ENCODE measurements at regions of chr20 and their contacts with region 1.

Region 1: GRCh38 chr20:21099751-21100577 is 6.2 kb downstream of the LINC00237 start:
- DNase-seq: peak; percentile 64
- CTCF ChIP-seq: no peak

Region 2: DNA sequence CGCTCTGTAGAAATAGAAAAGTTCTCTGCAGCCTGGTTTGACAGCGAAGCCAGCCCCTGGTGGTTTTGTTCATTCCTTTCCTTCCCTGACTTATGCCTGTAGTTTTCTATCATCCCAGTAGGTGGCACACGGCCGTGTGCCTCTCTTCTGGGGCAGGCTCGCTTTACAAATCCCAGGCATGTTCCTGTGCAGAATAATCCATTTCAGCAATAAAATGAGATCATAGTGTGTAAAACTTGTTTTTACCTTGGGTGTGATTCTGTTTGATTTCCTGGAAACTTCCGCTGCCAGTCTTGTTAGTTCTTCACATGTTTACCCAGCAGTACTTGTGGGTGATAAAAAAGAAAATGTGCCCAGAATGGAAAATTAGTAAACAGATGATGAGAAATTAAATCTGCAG is 739.5 kb before region 1 on chr20:
- in situ Hi-C with region 1: loop called (anchors 25 kb)
- DNase-seq: peak; percentile 73
- CTCF ChIP-seq: peak; percentile 78

Region 3: GRCh38 chr20:21395666-21396598 is 296.0 kb after region 1 on chr20:
- in situ Hi-C with region 1: loop called (anchors 25 kb)
- DNase-seq: no peak
- CTCF ChIP-seq: no peak

Region 4: GRCh38 chr20:21505161-21505809 is 405.3 kb after region 1 on chr20:
- in situ Hi-C with region 1: loop called (anchors 25 kb)
- DNase-seq: peak; percentile 89
- CTCF ChIP-seq: peak; percentile 98

Region 5: DNA sequence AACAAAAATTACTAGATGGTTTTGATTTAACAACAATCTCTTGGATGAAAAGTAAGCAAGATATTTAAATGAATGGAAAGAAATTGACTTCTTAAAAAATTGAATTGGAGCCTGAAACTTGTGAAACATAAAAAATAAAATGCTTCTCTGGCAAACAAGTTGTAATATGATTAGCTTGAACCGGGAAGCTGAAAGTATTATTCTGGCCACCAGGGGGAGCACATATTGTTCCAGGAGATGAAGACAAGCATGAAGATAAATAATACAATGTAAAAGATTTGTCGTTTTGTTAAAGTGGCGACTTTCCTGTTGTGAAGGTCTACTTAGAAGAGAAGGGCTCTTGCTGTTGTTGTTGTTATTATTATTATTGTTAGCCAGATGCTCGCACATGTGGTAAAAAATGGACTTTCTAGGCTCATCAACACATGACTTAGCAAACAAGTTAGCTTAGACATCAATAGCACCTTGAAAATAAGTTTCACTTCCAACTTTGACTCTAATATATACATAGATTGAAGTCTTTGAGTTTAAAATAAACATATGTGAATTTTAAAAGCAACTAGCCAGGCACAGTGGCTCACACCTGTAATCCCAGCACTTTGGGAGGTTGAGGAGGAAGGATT is 619.7 kb after region 1 on chr20:
- in situ Hi-C with region 1: loop called (anchors 25 kb)
- DNase-seq: peak; percentile 72
- CTCF ChIP-seq: peak; percentile 78

Region 6: DNA sequence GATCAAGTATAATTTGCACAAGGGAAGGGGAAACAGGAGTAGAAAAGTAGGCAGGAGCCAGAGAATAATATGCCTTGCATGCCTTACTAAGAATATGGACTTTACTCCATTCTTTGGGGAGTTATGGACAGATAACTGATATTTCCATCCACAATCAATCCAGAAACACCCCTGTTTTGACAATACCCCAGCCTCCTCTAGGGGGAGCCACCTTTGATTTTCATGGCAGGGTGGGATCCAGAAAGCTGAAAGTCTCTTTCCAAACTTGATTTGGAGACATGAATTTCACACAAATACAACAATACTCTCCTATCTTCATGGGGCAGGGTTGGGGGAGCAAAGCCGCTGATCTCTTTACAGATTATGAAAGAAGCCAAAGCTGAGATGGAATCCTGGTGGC is 1080.3 kb after region 1 on chr20:
- in situ Hi-C with region 1: no loop called
- DNase-seq: no peak
- CTCF ChIP-seq: peak; percentile 19

Region 7: GRCh38 chr20:22567944-22568871 is 1468.2 kb after region 1 on chr20:
- in situ Hi-C with region 1: loop called (anchors 25 kb)
- DNase-seq: no peak
- CTCF ChIP-seq: no peak

Measured in GM13977 (cell line).